A673 (cell line): ENCODE measurements at regions of chr13 and their contacts with region 1.

Region 1: DNA sequence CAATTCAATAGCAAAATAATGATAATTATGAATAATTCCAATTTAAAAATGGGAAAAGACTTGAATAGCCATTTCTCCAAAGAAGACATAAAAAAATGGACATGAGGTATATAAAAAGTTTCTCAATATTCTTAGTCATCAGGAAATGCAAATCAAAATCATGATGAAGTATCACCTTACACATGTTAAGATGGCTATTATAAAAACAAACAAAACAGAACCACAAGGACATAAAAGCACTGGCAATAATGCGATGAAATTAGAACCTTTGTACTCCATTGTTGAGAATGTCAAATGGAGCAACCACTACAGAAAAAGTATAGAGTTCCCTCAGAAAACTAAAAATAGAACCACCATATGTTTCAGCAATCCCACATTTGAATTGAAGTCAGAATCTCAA is 1186.1 kb downstream of the SLITRK5 start:
- DNase-seq: no peak
- H3K4me3 ChIP-seq: no peak overlapping the region
- H3K27ac ChIP-seq: no peak overlapping the region
- H3K4me1 ChIP-seq: no peaks in the 10 kb centered on the region
- H3K27me3 ChIP-seq: no peaks in the 10 kb centered on the region
- CTCF ChIP-seq: no peak

Region 2: DNA sequence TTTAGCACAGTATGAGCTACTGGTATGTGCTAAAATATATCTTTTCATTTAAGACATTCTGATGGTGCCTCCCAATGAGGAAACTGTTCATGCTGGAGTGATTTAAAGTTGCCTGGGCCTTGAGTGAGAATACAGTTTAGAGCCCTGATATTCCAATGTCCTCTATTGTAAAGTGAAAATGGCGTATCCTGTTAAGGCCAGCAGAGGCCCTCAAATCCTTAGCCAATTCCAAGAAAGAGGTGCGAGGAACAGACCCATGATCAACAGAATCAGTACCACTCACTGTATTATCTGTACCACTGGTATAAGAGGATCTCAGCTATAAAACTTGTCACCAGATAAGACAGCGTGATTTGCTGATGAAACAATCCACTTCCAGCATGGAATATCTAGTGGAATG is 1459.2 kb before region 1 on chr13:
- CTCF ChIA-PET with region 1: no interaction called
- POLR2A ChIA-PET with region 1: no interaction called
- intact Hi-C with region 1: no loop called
- DNase-seq: no peak
- H3K4me3 ChIP-seq: no peak overlapping the region
- H3K27ac ChIP-seq: no peak overlapping the region
- H3K4me1 ChIP-seq: no peaks in the 10 kb centered on the region
- H3K27me3 ChIP-seq: no peaks in the 10 kb centered on the region
- CTCF ChIP-seq: no peak

Region 3: DNA sequence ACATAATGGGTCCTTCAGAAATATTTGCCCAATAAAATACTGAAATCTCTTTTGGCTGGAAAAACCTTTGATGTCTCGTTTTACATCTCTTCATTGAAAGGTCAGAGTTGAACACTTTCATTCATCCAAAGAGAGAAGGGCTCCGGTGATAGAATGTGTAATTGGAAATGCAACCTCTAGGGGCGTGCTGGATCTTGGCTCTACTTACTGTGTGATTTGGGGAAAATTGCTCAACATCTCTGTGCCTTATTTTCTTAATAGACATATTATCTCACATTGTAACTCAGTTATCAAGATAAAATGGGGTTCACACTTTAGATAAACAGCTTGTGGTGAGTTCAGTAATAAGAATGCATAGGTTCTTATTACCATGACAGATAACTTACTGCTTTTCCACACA is 258.1 kb after region 1 on chr13:
- CTCF ChIA-PET with region 1: no interaction called
- POLR2A ChIA-PET with region 1: no interaction called
- intact Hi-C with region 1: loop called (anchors 5 kb)
- DNase-seq: peak; percentile 2
- H3K4me3 ChIP-seq: no peak overlapping the region
- H3K27ac ChIP-seq: no peak overlapping the region
- H3K4me1 ChIP-seq: no peaks in the 10 kb centered on the region
- H3K27me3 ChIP-seq: no peaks in the 10 kb centered on the region
- CTCF ChIP-seq: no peak

Region 4: DNA sequence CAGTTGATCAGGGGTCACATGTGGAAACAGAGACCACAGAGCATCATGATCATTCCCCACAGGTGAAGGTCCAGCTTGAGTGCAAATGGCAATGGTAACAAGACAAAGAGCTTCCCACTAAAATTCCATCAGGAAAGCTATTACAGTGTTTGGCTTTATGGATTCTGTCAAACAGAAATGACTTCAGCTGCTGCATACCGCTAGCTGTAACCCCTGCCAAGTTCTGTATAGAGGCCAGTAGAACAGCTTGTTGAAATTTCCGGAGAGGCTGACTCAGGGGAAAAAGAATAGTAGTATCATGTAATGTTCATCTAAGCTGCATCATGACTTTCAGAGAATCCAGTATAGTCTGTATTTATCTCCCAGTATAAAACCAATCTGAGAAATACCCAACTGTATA is 518.6 kb after region 1 on chr13:
- CTCF ChIA-PET with region 1: no interaction called
- POLR2A ChIA-PET with region 1: no interaction called
- intact Hi-C with region 1: no loop called
- DNase-seq: peak; percentile 35
- H3K4me3 ChIP-seq: no peak overlapping the region
- H3K27ac ChIP-seq: no peak overlapping the region
- H3K4me1 ChIP-seq: no peaks in the 10 kb centered on the region
- H3K27me3 ChIP-seq: no peaks in the 10 kb centered on the region
- CTCF ChIP-seq: no peak